HepG2 (cell line): ENCODE measurements at regions of chr5 and their contacts with region 1.

Region 1: GRCh38 chr5:141084487-141084990 is 9.9 kb upstream of the PCDHB2 start:
- DNase-seq: peak; percentile 72
- ATAC-seq: peak; percentile 100
- H3K4me3 ChIP-seq: peak overlapping the region; percentile 65 to 78 (median 66)
- H3K27ac ChIP-seq: no peak overlapping the region
- H3K4me1 ChIP-seq: peaks cover 12% of the 10 kb centered on the region
- H3K27me3 ChIP-seq: peaks cover 0 to 7% of the 10 kb centered on the region in 2 experiments; a peak in 1 of 5 replicates
- CTCF ChIP-seq: peak; percentile 84
- EP300 ChIP-seq: no peak
- POLR2A ChIP-seq: peak; percentile 38 to 58; a peak in 3 of 4 replicates
- RAD21 ChIP-seq: peak; percentile 52; the same call in 1 of the 2 replicates

Region 2: GRCh38 chr5:139755892-139756671 is 1328.5 kb before region 1 on chr5:
- CTCF ChIA-PET with region 1: no interaction called
- POLR2A ChIA-PET with region 1: no interaction called
- in situ Hi-C with region 1: no loop called
- intact Hi-C with region 1: no loop called
- DNase-seq: peak; percentile 41
- ATAC-seq: peak; percentile 11; the same call in 2 of the 3 replicates
- H3K4me3 ChIP-seq: peak overlapping the region; percentile 21 to 65 (median 48); a peak in 5 of 6 replicates
- H3K27ac ChIP-seq: no peak overlapping the region
- H3K4me1 ChIP-seq: peaks cover 84% of the 10 kb centered on the region
- H3K27me3 ChIP-seq: peaks cover 3 to 26% of the 10 kb centered on the region in 2 experiments; a peak in 3 of 5 replicates
- CTCF ChIP-seq: peak; percentile 33; the same call in 1 of the 2 replicates
- EP300 ChIP-seq: peak in 1 of 2 experiments; percentile 40; a peak in 1 of 4 replicates
- POLR2A ChIP-seq: no peak
- RAD21 ChIP-seq: no peak

Region 3: DNA sequence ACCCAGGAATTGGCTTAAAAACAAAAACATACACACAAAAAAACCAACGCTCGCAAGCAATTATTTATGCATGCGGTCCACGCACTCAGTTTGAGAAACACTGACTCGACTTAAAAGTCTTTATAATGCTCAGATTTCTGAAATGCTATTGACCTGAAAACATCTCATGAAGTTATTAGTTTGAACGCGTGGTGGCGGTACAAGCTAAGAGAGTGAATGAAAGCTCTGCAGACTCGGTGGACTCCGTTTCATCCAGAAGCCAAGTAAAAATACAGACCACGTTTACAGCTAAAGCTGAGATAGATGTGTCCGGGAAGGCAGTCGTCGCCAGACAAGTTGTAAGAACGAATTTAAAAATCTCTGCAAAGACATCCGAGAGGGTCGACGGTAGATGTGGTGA is 65.3 kb after region 1 on chr5 and contains the start of gene PCDHB6:
- CTCF ChIA-PET with region 1: no interaction called
- POLR2A ChIA-PET with region 1: no interaction called
- in situ Hi-C with region 1: no loop called
- intact Hi-C with region 1: loop called (anchors 2 kb)
- DNase-seq: peak; percentile 56
- ATAC-seq: peak; percentile 90
- H3K4me3 ChIP-seq: peak within 1 kb of the TSS in 2 of 3 experiments; percentile 18 to 47; a peak in 2 of 6 replicates
- H3K27ac ChIP-seq: no peak within 1 kb of the TSS
- H3K4me1 ChIP-seq: peaks cover 7% of the 10 kb centered on the region; the same call in 1 of the 2 replicates
- H3K27me3 ChIP-seq: peaks cover 0 to 10% of the 10 kb centered on the region in 2 experiments; a peak in 1 of 5 replicates
- CTCF ChIP-seq: peak; percentile 72
- EP300 ChIP-seq: no peak
- POLR2A ChIP-seq: no peak
- RAD21 ChIP-seq: peak; percentile 42; the same call in 1 of the 2 replicates
- total RNA-seq, gene PCDHB6: 0.04 TPM in 1 of 2 replicates, not detected in the other

Region 4: DNA sequence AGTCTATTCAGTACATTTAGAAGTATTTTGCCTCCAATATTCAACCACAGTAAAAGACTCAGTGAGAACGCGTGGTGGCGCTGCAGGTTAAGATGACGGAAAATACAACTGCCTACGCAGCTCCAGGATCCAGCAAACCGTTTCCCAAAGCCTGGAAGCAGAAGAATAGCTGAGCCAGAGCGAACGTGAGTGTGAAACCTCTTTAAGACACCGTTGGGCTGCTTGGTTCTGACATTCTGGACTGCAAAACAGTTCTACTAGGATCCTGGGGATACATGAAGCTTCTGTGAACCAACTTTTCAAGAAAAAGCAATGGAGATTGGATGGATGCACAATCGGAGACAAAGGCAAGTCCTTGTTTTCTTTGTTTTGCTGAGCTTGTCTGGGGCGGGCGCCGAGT is 97.7 kb after region 1 on chr5 and contains the start of gene PCDHB16:
- CTCF ChIA-PET with region 1: interaction called, 3 read pairs
- POLR2A ChIA-PET with region 1: no interaction called
- in situ Hi-C with region 1: no loop called
- intact Hi-C with region 1: loop called (anchors 1 kb)
- DNase-seq: peak; percentile 53
- ATAC-seq: peak; percentile 89
- H3K4me3 ChIP-seq: peak within 1 kb of the TSS; percentile 35 to 61 (median 58); a peak in 5 of 6 replicates
- H3K27ac ChIP-seq: no peak within 1 kb of the TSS
- H3K4me1 ChIP-seq: no peaks in the 10 kb centered on the region; the same call in 1 of the 2 replicates
- H3K27me3 ChIP-seq: no peaks in the 10 kb centered on the region; a peak in 1 of 5 replicates
- CTCF ChIP-seq: peak; percentile 79
- EP300 ChIP-seq: no peak
- POLR2A ChIP-seq: no peak
- RAD21 ChIP-seq: peak; percentile 56; the same call in 1 of the 2 replicates
- total RNA-seq, gene PCDHB16: 0.41 and 0.60 TPM in 2 replicates

Region 5: DNA sequence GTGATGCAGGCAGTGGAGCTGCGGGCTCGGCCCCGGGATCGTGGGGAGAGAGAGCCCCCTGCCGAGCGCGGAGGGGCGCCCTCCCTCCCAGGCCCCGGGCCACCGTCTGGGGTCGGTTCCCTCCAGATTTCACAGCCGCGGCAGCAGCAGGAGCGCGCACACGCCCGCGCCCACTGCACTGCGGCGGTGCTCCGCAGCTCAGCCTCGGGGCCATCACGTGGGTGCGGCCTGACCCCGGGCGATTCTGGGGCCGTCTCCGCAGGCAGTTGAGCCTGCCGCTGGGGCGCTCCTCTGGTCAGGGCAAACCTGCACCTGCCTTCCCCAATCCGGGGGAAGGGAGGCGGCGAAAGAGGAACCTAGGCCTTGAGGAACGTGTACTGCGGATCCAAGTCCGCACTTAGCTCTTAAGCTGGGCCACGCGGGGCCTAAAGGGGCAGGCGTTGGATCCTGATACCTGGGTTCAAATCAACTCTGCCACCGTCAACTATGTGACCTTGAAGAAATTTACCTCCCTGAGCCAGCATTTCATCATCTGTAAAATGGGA is 829.7 kb after region 1 on chr5:
- CTCF ChIA-PET with region 1: no interaction called
- POLR2A ChIA-PET with region 1: no interaction called
- in situ Hi-C with region 1: no loop called
- intact Hi-C with region 1: no loop called
- DNase-seq: no peak
- ATAC-seq: peak; percentile 91
- H3K4me3 ChIP-seq: peak overlapping the region; percentile 18 to 66 (median 22); a peak in 5 of 6 replicates
- H3K27ac ChIP-seq: no peak overlapping the region
- H3K4me1 ChIP-seq: peaks cover 18% of the 10 kb centered on the region
- H3K27me3 ChIP-seq: peaks cover 0 to 32% of the 10 kb centered on the region in 2 experiments; a peak in 3 of 5 replicates
- CTCF ChIP-seq: peak; percentile 75
- EP300 ChIP-seq: no peak
- POLR2A ChIP-seq: no peak
- RAD21 ChIP-seq: 0 out of 2 replicates have a peak, but pooled peaks have one; percentile 10